CD4-positive, alpha-beta T cell (primary cell): ENCODE measurements at regions of chr17 and their contacts with region 1.

Region 1: GRCh38 chr17:30831663-30832437 is at the start of gene ATAD5:
- DNase-seq: peak; percentile 76 to 94 (median 83)
- ATAC-seq: peak; percentile 98
- H3K4me3 ChIP-seq: peak within 1 kb of the TSS; percentile 76
- H3K4me3 Mint-ChIP-seq: peak within 1 kb of the TSS; percentile 100
- H3K27ac ChIP-seq: peak within 1 kb of the TSS in 1 of 2 donors; percentile 9
- H3K27ac Mint-ChIP-seq: peak within 1 kb of the TSS; percentile 86
- H3K4me1 ChIP-seq: peaks cover 16% of the 10 kb centered on the region
- H3K4me1 Mint-ChIP-seq: peaks cover 30% of the 10 kb centered on the region
- H3K27me3 ChIP-seq: no peaks in the 10 kb centered on the region
- H3K27me3 Mint-ChIP-seq: no peaks in the 10 kb centered on the region
- CTCF ChIP-seq: no peak
- total RNA-seq, gene ATAD5: 3.6 to 3.9 TPM

Region 2: GRCh38 chr17:30808785-30809286 is 23.0 kb before region 1 on chr17:
- CTCF ChIA-PET with region 1: interaction called, 160 read pairs
- POLR2A ChIA-PET with region 1: interaction called, 289 read pairs
- intact Hi-C with region 1: no loop called
- DNase-seq: peak in 7 of 14 experiments; percentile 24 to 88 (median 54)
- ATAC-seq: peak; percentile 90
- H3K4me3 ChIP-seq: peak overlapping the region; percentile 38
- H3K4me3 Mint-ChIP-seq: peak overlapping the region; percentile 89
- H3K27ac ChIP-seq: peak overlapping the region; percentile 70 to 81
- H3K27ac Mint-ChIP-seq: peak overlapping the region; percentile 99
- H3K4me1 ChIP-seq: peaks cover 62% of the 10 kb centered on the region
- H3K4me1 Mint-ChIP-seq: peaks cover 77% of the 10 kb centered on the region
- H3K27me3 ChIP-seq: no peaks in the 10 kb centered on the region
- H3K27me3 Mint-ChIP-seq: no peaks in the 10 kb centered on the region
- CTCF ChIP-seq: no peak

Region 3: DNA sequence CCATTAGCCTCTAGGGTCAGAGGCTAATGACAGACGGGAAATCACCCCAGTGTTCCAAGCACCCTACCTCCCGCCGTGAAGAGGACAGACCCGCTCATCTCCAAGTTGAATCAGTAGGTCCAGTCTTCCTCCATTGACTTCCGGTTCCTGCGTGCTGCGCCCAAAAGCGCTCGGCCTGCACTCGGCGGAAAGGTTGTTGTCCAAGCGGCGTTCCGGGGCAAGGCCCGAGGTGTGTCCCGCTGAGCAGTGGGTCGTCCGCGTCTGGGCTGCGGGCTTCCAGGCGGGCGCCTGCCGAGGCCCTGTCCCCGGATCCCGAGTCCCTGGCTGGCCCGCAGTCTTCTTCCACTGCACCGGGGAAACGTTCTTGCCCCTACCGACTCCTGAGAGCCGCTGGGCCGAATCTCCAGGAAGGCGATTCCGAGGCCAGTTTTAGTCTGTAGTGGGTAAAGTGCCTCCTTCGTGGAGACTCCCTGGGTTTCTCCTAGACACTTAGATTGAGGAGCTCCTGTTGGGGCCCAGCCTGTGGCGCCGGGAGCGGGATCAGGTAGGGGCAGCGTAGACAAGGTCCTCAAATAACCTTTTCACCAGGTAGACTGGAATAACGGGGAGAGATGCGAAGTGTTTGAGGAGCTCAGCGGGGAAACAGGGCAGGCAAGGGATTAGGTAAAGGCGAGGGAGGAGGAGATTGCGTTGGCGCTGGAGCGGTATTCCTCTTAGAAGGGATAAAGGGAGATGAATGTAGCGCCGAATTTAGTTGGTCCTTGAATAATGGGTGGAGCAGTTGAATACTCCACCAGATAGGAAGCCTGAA is 74.5 kb after region 1 on chr17 and contains the start of gene TEFM:
- CTCF ChIA-PET with region 1: no interaction called
- POLR2A ChIA-PET with region 1: no interaction called
- intact Hi-C with region 1: loop called in 1 of 2 experiments (anchors 5 kb)
- DNase-seq: peak; percentile 75 to 92 (median 86)
- ATAC-seq: peak; percentile 93
- H3K4me3 ChIP-seq: peak within 1 kb of the TSS; percentile 89
- H3K4me3 Mint-ChIP-seq: peak within 1 kb of the TSS; percentile 89
- H3K27ac ChIP-seq: peak within 1 kb of the TSS; percentile 73 to 84
- H3K27ac Mint-ChIP-seq: peak within 1 kb of the TSS; percentile 86
- H3K4me1 ChIP-seq: peaks cover 24% of the 10 kb centered on the region
- H3K4me1 Mint-ChIP-seq: peaks cover 56% of the 10 kb centered on the region
- H3K27me3 ChIP-seq: no peaks in the 10 kb centered on the region
- H3K27me3 Mint-ChIP-seq: no peaks in the 10 kb centered on the region
- CTCF ChIP-seq: no peak
- total RNA-seq, gene TEFM: 7.8 to 8.9 TPM